ENCODE measurements at regions of chr3 and their contacts with region 1.

Region 1: GRCh38 chr3:156509189-156510174 is 45.4 kb downstream of the SSR3 start:
- DNase-seq: peak in 4 of 5 donors; percentile 56 to 68 (median 62)
- H3K4me3 ChIP-seq: no peak overlapping the region
- H3K4me3 Mint-ChIP-seq: no peak overlapping the region
- H3K27ac ChIP-seq: no peak overlapping the region
- H3K27ac Mint-ChIP-seq: no peak overlapping the region
- H3K4me1 ChIP-seq: no peaks in the 10 kb centered on the region
- H3K4me1 Mint-ChIP-seq: peaks cover 0 to 17% (median 8%) of the 10 kb centered on the region in 4 donors
- H3K27me3 ChIP-seq: no peaks in the 10 kb centered on the region
- H3K27me3 Mint-ChIP-seq: peaks cover 2 to 3% of the 10 kb centered on the region in 2 donors

Region 2: DNA sequence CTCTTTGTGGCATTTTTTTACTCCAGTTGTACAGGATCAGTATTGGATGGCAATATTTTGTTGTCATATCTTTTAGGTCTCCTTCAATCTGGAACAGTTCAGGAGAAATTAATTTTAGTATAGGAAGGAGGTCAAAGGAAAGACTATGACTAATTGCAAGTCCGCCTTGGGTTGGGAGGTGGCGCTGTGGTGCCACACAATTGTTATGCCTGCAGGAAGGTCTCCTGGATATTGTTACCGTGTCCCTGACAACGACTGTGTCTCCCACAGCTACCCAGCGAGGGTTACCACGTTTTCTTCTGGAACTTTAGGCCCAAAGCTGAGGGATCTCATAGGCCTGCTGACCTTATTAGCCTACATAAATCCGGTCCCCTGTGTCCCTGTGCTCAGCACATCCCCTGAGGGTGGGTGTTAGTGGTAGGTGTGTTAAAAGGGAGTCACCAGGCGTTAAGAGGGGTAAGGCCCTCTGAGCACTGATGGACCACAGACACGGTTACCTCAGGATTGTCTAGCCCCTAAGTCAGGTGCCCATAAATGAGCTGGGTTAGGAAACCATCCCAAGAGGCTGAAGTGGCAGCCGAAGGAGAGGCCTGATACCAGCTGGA is 357.6 kb before region 1 on chr3:
- CTCF ChIA-PET with region 1: interaction called, 172 read pairs
- POLR2A ChIA-PET with region 1: interaction called, 7 read pairs
- intact Hi-C with region 1: loop called (anchors 1 kb)
- DNase-seq: peak; percentile 40 to 56 (median 45)
- H3K4me3 ChIP-seq: no peak overlapping the region
- H3K4me3 Mint-ChIP-seq: no peak overlapping the region
- H3K27ac ChIP-seq: no peak overlapping the region
- H3K27ac Mint-ChIP-seq: peak overlapping the region in 2 of 7 donors; percentile 31 to 63
- H3K4me1 ChIP-seq: no peaks in the 10 kb centered on the region
- H3K4me1 Mint-ChIP-seq: peaks cover 0 to 1% (median under 1%) of the 10 kb centered on the region in 4 donors
- H3K27me3 ChIP-seq: no peaks in the 10 kb centered on the region
- H3K27me3 Mint-ChIP-seq: peaks cover 0 to 1% of the 10 kb centered on the region in 2 donors

Region 3: DNA sequence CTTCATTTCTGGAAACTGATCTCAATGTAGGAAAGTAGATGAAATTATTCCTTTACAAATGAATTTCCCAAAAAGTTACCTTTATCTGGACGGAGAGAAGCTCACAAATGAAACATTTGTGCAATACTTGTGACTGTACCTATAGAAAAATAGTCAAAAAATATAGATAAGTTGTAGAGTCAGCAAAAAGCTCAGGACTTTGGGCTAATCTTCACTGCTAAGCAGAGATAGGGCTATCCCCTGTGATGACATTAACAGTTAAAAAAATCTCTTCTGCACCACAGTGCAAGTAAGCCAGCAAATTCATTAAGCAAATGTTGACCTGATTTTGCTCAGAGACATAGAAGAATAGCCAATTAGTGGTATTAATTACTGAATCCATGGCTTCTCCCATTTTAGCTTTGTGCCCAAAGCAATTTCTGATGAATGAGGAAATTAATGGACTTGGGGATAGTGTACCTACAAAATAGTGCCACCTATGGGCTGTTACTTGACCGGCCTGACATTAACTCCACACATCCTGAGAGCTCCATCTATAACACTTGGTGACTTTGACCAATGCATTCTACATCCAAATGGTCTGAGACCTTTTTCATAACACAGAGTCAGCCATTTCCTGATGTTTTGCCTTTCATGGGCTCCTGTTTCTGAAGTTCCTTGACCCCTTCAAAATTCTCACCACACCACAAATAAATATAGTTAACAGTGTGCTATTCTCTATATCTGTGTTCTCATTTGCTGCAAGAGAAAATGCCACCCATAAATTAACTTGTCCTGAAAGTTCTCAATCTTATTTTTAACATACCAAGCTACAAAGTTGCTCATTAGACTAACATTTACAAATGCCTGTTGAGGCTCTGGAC is 59.5 kb before region 1 on chr3:
- CTCF ChIA-PET with region 1: interaction called, 46 read pairs
- POLR2A ChIA-PET with region 1: interaction called, 7 read pairs
- intact Hi-C with region 1: loop called (anchors 1 kb)
- DNase-seq: peak in 1 of 5 donors; percentile 10
- H3K4me3 ChIP-seq: no peak overlapping the region
- H3K4me3 Mint-ChIP-seq: no peak overlapping the region
- H3K27ac ChIP-seq: no peak overlapping the region
- H3K27ac Mint-ChIP-seq: no peak overlapping the region
- H3K4me1 ChIP-seq: no peaks in the 10 kb centered on the region
- H3K4me1 Mint-ChIP-seq: no peaks in the 10 kb centered on the region
- H3K27me3 ChIP-seq: no peaks in the 10 kb centered on the region
- H3K27me3 Mint-ChIP-seq: peaks cover 2 to 4% of the 10 kb centered on the region in 2 donors

Region 4: DNA sequence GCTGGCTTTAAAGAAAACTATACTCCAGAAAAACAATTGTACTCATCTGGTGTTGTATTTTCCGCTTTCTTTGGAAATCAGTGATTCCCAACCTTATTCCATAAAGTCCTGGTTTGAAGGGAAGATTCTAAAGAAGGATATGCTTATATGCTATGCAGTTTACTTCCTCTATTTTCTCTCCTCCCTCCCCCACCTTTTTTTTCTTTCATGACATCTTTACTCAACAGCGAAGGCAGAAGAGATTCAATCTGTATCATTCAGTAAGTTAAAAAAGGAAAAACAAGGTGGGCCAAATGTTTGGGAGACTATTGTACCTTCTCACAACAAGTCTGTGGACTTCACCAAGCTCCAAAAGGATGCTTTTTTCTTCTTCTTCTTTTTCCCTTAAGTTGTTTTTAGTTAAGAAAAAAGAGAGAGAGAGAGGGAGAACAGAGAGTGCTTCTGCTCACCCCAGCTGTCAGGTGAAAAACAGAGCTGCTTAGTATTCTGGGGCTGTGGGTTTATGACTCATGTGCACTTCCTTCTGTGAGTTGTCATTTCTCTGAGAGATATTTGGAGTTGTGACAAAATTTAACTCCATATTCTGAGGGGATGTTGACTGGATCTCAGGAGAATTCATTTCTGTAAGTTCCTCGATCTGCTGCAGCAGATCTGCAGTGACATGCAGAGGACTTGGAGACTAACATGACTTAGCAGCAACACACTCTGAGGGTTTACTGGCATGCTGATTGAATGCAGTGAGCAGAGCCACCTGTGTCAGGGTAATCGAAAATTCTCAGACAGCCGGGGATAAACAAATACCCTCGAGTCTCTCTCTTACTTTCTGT is 25.3 kb before region 1 on chr3:
- CTCF ChIA-PET with region 1: interaction called, 125 read pairs
- POLR2A ChIA-PET with region 1: interaction called, 57 read pairs
- intact Hi-C with region 1: loop called (anchors 1 kb)
- DNase-seq: peak; percentile 55 to 81 (median 64)
- H3K4me3 ChIP-seq: peak overlapping the region; percentile 42 to 55
- H3K4me3 Mint-ChIP-seq: peak overlapping the region; percentile 21 to 87 (median 77)
- H3K27ac ChIP-seq: peak overlapping the region; percentile 63
- H3K27ac Mint-ChIP-seq: peak overlapping the region; percentile 77 to 94 (median 92)
- H3K4me1 ChIP-seq: peaks cover 43% of the 10 kb centered on the region
- H3K4me1 Mint-ChIP-seq: peaks cover 32 to 52% (median 39%) of the 10 kb centered on the region in 4 donors
- H3K27me3 ChIP-seq: no peaks in the 10 kb centered on the region
- H3K27me3 Mint-ChIP-seq: no peaks in the 10 kb centered on the region

Region 5: DNA sequence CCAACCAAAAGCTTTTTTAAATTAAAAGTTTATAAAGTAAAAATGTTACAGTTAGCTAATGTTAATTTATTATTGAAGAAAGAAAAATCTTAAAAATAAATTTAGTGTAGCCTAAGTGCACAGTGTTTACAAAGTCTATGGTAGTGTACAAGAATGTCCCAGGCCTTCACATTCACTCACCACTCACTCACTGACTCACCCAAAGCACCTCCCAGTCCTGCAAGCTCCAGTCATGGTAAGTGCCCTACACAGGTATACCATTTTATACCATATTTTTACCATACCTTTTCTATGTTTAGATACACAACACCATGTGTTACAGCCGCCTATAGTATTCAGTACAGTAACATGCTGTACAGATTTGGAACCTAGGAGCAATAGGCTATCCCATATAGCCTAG is 16.3 kb after region 1 on chr3:
- CTCF ChIA-PET with region 1: interaction called, 15 read pairs
- POLR2A ChIA-PET with region 1: interaction called, 7 read pairs
- intact Hi-C with region 1: no loop called
- DNase-seq: no peak
- H3K4me3 ChIP-seq: no peak overlapping the region
- H3K4me3 Mint-ChIP-seq: peak overlapping the region in 1 of 8 donors; percentile 24
- H3K27ac ChIP-seq: no peak overlapping the region
- H3K27ac Mint-ChIP-seq: no peak overlapping the region
- H3K4me1 ChIP-seq: peaks cover 6% of the 10 kb centered on the region
- H3K4me1 Mint-ChIP-seq: peaks cover 12 to 17% (median 14%) of the 10 kb centered on the region in 4 donors
- H3K27me3 ChIP-seq: no peaks in the 10 kb centered on the region
- H3K27me3 Mint-ChIP-seq: peaks cover 7 to 8% of the 10 kb centered on the region in 2 donors

Region 6: DNA sequence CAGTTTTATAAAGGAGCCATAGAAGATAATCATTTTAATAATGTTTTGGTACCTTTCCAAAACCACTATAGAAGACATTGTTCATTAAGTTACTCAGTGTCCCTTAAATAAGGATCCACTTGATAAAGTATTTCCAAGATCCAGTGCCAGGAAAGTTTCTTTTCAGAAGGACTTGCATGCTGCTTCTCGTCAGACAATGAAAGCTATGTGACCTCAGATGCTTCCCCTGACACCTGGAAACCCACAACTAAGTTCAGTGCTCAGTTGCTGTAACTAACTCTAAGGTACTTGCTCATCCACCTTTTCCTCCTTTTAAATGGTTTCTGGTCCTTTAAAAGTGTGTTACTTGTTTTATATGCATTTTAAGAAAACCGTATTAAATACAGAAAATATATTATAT is 38.2 kb after region 1 on chr3:
- CTCF ChIA-PET with region 1: interaction called, 54 read pairs
- POLR2A ChIA-PET with region 1: no interaction called
- intact Hi-C with region 1: no loop called
- DNase-seq: no peak
- H3K4me3 ChIP-seq: no peak overlapping the region
- H3K4me3 Mint-ChIP-seq: no peak overlapping the region
- H3K27ac ChIP-seq: no peak overlapping the region
- H3K27ac Mint-ChIP-seq: peak overlapping the region in 3 of 7 donors; percentile 20 to 84 (median 40)
- H3K4me1 ChIP-seq: peaks cover 20% of the 10 kb centered on the region
- H3K4me1 Mint-ChIP-seq: peaks cover 32 to 53% (median 43%) of the 10 kb centered on the region in 4 donors
- H3K27me3 ChIP-seq: no peaks in the 10 kb centered on the region
- H3K27me3 Mint-ChIP-seq: no peaks in the 10 kb centered on the region